ENCODE measurements at regions of chr16 and their contacts with region 1.

Region 1: GRCh38 chr16:46908540-46909372 is 24.6 kb downstream of the GPT2 start:
- DNase-seq: no peak

Region 2: GRCh38 chr16:46583036-46583435 is 325.7 kb before region 1 on chr16:
- intact Hi-C with region 1: no loop called
- DNase-seq: no peak

Region 3: DNA sequence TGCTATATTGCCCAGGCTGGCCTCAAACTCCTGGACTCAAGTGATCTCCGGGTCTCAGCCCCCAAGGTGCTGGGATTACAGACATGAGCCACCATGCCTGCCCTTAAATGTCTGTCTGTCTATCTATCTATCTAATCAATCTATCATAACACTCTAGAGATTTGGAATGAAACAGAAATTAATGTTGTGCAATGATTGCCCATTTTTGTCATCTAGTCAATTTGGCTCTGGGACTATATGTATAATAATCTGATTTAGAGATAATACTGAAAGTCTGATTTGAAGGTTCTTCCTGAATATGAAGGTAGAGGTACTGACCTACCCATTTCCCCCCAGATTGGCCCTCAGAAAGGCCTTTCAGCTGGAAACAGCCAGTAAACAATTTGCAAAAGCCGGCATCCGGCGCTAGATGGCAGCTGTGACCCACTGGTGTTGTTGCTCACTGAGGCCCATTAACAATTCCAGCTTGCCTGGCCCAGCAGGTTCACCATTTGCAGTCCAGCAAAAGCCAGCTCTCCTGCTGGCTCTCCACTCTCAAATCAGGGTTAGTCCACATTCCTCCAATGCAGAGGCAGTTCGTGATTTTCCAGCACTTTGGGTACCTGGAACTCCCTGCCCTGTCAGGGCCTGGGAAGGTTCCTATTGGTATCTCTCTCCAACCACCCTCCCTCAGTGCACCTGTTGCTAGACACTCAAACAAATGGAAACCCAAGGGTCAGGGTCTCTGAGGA is 54.9 kb before region 1 on chr16:
- intact Hi-C with region 1: loop called (anchors 2 kb)
- DNase-seq: peak; percentile 89

Region 4: DNA sequence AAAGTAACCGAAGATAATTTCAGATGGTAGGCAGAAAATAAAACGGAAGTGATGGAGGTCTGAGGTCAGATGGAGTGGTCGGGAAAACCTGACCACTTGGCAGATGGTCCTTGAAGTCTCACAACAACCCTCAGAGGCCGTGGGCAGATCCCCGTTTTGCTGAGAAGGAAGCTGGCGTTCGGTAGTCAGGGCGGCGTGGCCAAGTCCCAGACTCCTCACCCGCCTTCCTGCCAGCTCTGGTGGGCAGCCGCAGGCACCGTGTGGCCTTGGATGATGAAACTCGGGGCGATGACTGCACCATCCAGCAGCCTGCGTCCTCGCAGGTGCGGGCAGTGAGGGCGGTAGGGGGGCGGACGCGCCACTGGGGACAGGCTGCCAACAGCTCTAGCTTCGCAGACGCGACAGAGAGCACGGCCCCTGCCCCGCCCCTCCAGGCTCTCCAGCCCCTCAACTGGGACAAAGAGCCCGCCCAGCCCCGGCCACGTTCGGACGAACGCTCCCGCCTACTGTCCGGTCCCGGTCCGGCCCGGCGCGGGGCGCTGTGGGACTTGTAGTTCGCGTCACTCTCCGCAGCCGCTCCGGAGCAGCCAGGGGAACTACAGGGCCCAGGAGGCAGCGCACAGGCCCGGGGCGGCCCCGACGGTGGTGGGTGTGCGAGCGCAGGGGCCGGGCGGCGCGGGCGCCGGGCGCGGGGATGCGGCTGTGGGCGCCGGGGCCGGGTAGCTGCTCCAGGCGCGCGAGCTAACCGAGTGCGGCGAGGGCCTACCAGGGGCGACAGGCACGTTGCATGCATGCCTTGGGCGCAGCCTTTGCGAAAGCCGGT is 24.9 kb before region 1 on chr16 and contains the start of gene GPT2:
- intact Hi-C with region 1: loop called in 1 of 2 experiments (anchors 1 kb)
- DNase-seq: peak; percentile 98
- total RNA-seq, gene GPT2: 3.3 to 4.5 TPM

Region 5: DNA sequence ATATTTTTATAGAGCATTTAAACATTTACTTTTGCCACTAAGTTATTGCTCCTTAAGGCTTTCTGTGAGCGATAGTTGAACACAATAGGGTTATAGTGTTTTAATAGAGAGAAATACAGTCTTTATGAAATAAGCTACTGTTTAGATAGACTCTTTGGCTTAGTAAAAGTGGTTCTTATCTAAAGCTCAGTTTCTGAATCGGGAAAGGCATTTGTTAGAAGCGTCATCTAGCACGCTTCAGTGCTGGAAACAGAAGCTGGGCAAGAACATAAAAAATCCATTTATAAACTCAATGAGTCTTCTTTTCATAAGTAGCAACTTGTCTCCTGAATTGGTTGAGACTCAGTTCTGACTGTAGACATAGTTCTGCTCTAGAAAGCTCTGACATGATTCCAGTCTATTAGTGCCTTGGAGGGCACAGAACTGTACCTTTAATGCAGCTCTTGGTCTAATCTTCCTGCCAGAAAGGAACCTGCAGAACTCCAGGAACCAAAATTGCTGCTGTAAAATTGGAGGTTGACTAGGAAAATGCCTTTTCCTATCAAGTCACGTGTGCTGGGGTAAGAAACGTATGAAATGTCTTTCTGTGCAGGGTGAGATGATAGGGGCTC is 120.1 kb after region 1 on chr16:
- intact Hi-C with region 1: no loop called
- DNase-seq: no peak